CD14-positive monocyte (primary cell): ENCODE measurements at regions of chr18 and their contacts with region 1.

Region 1: DNA sequence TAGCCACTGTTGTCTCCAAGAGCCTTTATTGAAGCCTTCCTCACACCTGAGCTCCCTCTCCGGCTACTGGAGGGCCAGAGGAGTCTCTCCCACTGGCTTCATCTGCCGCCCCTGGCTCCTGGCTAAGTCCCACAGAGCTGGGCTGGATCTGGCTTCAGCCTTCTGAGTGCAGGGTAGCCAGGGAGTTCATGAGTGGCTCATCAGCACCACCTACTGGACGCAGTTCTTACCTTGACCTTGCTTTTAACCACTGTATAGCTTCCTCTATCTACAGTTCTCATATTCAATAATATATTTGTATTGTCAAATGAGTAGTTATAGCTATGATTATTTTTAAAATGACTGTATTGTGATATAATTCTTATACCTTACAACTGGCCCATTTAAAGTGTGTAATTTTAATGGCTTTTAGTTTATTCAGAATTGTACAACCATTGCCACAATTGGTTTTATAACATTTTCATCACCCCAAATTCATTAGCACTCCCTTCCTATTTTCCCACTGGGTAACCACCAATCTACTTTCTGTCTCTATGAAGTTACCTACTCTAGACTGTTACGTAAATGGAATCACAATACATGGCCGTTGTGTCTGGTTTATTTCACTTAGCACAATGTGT is 17.7 kb downstream of the CNDP1 start:
- DNase-seq: peak; percentile 74 to 85 (median 80)
- H3K4me3 ChIP-seq: no peak overlapping the region
- H3K4me3 Mint-ChIP-seq: no peak overlapping the region
- H3K27ac ChIP-seq: no peak overlapping the region
- H3K27ac Mint-ChIP-seq: no peak overlapping the region
- H3K4me1 ChIP-seq: no peaks in the 10 kb centered on the region
- H3K4me1 Mint-ChIP-seq: peaks cover 1% of the 10 kb centered on the region
- H3K27me3 ChIP-seq: no peaks in the 10 kb centered on the region
- H3K27me3 Mint-ChIP-seq: peaks cover 6 to 9% (median 6%) of the 10 kb centered on the region in 3 donors
- CTCF ChIP-seq: peak; percentile 92

Region 2: GRCh38 chr18:74353169-74353775 is 198.8 kb before region 1 on chr18:
- intact Hi-C with region 1: loop called in 1 of 2 experiments (anchors 2 kb)
- DNase-seq: peak; percentile 21 to 55 (median 30)
- H3K4me3 ChIP-seq: no peak overlapping the region
- H3K4me3 Mint-ChIP-seq: no peak overlapping the region
- H3K27ac ChIP-seq: no peak overlapping the region
- H3K27ac Mint-ChIP-seq: no peak overlapping the region
- H3K4me1 ChIP-seq: peaks cover 3 to 11% of the 10 kb centered on the region in 2 donors
- H3K4me1 Mint-ChIP-seq: peaks cover 12% of the 10 kb centered on the region
- H3K27me3 ChIP-seq: no peaks in the 10 kb centered on the region
- H3K27me3 Mint-ChIP-seq: peaks cover 0 to 3% (median 2%) of the 10 kb centered on the region in 3 donors
- CTCF ChIP-seq: peak; percentile 54

Region 3: GRCh38 chr18:74499633-74500032 is 52.4 kb before region 1 on chr18:
- intact Hi-C with region 1: no loop called
- DNase-seq: peak; percentile 75 to 77 (median 76)
- H3K4me3 ChIP-seq: peak overlapping the region; percentile 36 to 86 (median 77)
- H3K4me3 Mint-ChIP-seq: peak overlapping the region; percentile 89 to 92
- H3K27ac ChIP-seq: peak overlapping the region; percentile 87 to 90
- H3K27ac Mint-ChIP-seq: peak overlapping the region; percentile 96 to 100 (median 99)
- H3K4me1 ChIP-seq: peaks cover 52 to 64% of the 10 kb centered on the region in 2 donors
- H3K4me1 Mint-ChIP-seq: peaks cover 65% of the 10 kb centered on the region
- H3K27me3 ChIP-seq: no peaks in the 10 kb centered on the region
- H3K27me3 Mint-ChIP-seq: no peaks in the 10 kb centered on the region
- CTCF ChIP-seq: no peak